Breast epithelium (tissue), 4 donors: ENCODE measurements at regions of chr1 and their contacts with region 1.

Region 1: GRCh38 chr1:182092336-182092735 is 30.8 kb upstream of the ZNF648 start:
- DNase-seq: no peak
- H3K4me3 ChIP-seq: no peak overlapping the region
- H3K27ac ChIP-seq: no peak overlapping the region
- H3K4me1 ChIP-seq: no peaks in the 10 kb centered on the region
- H3K27me3 ChIP-seq: no peaks in the 10 kb centered on the region
- CTCF ChIP-seq: no peak
- POLR2A ChIP-seq: no peak

Region 2: DNA sequence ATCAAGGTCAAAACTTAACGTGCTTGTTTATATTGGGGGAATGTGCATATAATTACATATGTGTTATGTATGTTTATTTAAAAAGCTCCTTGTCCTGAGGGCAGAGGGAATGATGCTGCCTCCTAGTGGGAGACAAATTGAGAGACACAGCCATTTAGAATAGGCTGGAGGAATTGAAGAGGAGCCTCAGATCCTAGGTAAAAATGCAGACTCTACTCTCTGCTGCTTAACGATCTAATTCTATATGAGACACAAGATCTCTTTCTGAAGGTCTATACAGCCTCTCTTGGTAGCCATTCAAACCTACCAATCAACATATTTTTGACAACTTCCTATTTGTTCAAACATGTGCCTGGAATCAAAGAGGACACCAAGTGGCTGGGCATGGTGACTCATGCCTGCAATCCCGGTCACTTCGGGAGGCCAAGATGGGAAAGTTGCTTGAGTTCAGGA is 105.7 kb after region 1 on chr1:
- intact Hi-C with region 1: loop called (anchors 5 kb)
- DNase-seq: no peak
- H3K4me3 ChIP-seq: no peak overlapping the region
- H3K27ac ChIP-seq: peak overlapping the region; percentile 31 to 56
- H3K4me1 ChIP-seq: peaks cover 0 to 6% of the 10 kb centered on the region in 2 donors
- H3K27me3 ChIP-seq: no peaks in the 10 kb centered on the region
- CTCF ChIP-seq: no peak
- POLR2A ChIP-seq: no peak

Region 3: GRCh38 chr1:182330303-182330702 is 238.0 kb after region 1 on chr1:
- intact Hi-C with region 1: no loop called
- DNase-seq: peak in 1 of 2 donors; percentile 39
- H3K4me3 ChIP-seq: no peak overlapping the region
- H3K27ac ChIP-seq: peak overlapping the region in 1 of 2 donors; percentile 17
- H3K4me1 ChIP-seq: no peaks in the 10 kb centered on the region
- H3K27me3 ChIP-seq: no peaks in the 10 kb centered on the region
- CTCF ChIP-seq: no peak
- POLR2A ChIP-seq: no peak

Region 4: DNA sequence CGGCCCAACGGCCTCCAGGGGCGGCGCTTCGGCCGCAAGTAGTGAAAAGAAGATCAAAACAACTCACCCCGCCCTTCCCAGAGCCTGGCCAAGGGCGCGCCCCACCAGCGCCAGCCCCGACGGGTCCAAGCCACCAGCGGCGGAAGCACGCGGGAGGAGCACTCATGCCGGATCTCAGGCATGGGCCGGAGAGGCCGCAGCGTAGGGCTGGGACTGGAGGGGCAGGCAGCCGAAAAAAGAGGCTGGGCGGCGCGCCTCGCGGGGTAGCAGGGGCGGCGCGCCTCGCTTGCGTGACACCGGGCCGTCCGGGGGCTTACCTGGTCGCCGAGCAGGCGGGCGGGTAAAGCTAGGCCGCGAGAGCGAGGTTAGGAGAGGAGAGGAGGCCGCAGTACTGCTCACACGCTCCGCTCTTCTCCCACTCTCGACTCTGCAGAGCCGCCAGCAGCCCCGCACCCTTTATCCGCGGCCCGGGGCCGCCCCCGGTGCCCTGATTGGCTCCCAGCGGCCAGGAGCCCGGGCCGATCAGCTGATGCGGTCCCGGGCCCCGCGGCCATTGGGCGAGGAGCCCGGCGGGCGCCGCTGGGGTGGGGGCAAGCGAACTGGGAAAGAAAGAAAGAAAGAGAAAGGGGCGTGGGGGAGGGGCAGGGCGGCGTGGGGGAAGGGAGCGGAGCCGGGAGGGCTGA is 299.2 kb after region 1 on chr1 and contains the start of gene GLUL:
- intact Hi-C with region 1: loop called (anchors 10 kb)
- DNase-seq: peak; percentile 93 to 94
- H3K4me3 ChIP-seq: peak within 1 kb of the TSS; percentile 86 to 96 (median 90)
- H3K27ac ChIP-seq: peak within 1 kb of the TSS; percentile 99
- H3K4me1 ChIP-seq: no peaks in the 10 kb centered on the region
- H3K27me3 ChIP-seq: no peaks in the 10 kb centered on the region
- CTCF ChIP-seq: peak in 1 of 3 donors; percentile 14
- POLR2A ChIP-seq: peak; percentile 97
- total RNA-seq, gene GLUL: 1,940 to 10,612 (median 2,824) TPM